Common myeloid progenitor, CD34-positive (primary cell): ENCODE measurements at regions of chr2 and their contacts with region 1.

Region 1: GRCh38 chr2:144516981-144517865 is 2.7 kb downstream of the ZEB2 start:
- DNase-seq: peak; percentile 58 to 86 (median 80)
- H3K4me3 ChIP-seq: peak overlapping the region; percentile 81 to 100 (median 94)
- H3K27ac ChIP-seq: peak overlapping the region; percentile 91 to 96
- H3K4me1 ChIP-seq: peaks cover 27 to 54% (median 39%) of the 10 kb centered on the region in 4 experiments
- H3K27me3 ChIP-seq: no peaks in the 10 kb centered on the region

Region 2: GRCh38 chr2:144198117-144198516 is 319.1 kb before region 1 on chr2:
- CTCF ChIA-PET with region 1: no interaction called
- POLR2A ChIA-PET with region 1: interaction called, 13 read pairs
- DNase-seq: peak in 2 of 3 donors; percentile 58 to 64
- H3K4me3 ChIP-seq: no peak overlapping the region
- H3K27ac ChIP-seq: no peak overlapping the region
- H3K4me1 ChIP-seq: no peaks in the 10 kb centered on the region
- H3K27me3 ChIP-seq: no peaks in the 10 kb centered on the region

Region 3: GRCh38 chr2:144529841-144530240 is 12.6 kb after region 1 on chr2:
- CTCF ChIA-PET with region 1: interaction called, 22 read pairs
- POLR2A ChIA-PET with region 1: no interaction called
- DNase-seq: no peak
- H3K4me3 ChIP-seq: no peak overlapping the region
- H3K27ac ChIP-seq: no peak overlapping the region
- H3K4me1 ChIP-seq: peaks cover 0 to 5% (median under 1%) of the 10 kb centered on the region in 4 experiments
- H3K27me3 ChIP-seq: no peaks in the 10 kb centered on the region

Region 4: GRCh38 chr2:144580521-144581161 is 63.4 kb after region 1 on chr2:
- CTCF ChIA-PET with region 1: interaction called, 22 read pairs
- POLR2A ChIA-PET with region 1: interaction called, 5 read pairs
- DNase-seq: peak; percentile 73 to 91 (median 85)
- H3K4me3 ChIP-seq: peak overlapping the region in 4 of 7 experiments; percentile 25 to 35 (median 30)
- H3K27ac ChIP-seq: peak overlapping the region; percentile 77 to 90
- H3K4me1 ChIP-seq: peaks cover 38 to 63% (median 49%) of the 10 kb centered on the region in 4 experiments
- H3K27me3 ChIP-seq: no peaks in the 10 kb centered on the region